WTC11 (cell line): ENCODE measurements at regions of chr14 and their contacts with region 1.

Region 1: DNA sequence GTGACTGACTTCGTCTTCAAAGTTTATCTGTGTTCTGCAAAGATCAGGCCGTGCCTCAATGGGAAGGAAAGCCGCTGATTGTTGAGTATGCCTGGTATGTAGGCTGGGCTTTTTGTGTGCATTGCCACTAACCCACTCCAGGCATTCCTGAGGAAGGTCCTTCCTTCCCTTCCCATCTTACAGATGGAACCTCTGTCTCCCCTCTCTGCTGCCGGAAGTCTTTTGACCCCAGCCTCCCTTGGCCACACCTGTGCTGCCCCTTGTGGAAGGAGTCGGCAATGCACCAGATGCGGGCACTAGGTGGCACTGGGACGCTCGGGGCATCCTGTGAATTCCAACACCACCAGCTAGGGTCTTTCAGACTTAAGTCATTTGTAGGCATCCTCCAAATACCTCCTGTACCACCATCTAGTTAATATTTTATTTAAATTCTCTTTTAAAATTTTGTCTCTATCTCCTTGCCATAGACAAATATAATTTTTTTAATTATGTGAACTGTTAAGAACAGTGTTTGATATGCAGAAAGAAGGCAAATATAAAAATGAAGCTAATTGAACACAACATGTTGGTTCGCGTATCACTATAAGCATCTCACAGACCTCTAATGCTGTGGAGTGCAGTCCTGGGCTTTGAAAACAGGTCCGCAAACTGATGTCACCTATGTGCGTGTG is 99.5 kb downstream of the RIN3 start:
- DNase-seq: peak; percentile 89
- ATAC-seq: peak; percentile 93
- H3K4me3 Mint-ChIP-seq: no peak overlapping the region
- H3K27ac Mint-ChIP-seq: no peak overlapping the region
- H3K4me1 Mint-ChIP-seq: peaks cover 13% of the 10 kb centered on the region
- H3K27me3 Mint-ChIP-seq: no peaks in the 10 kb centered on the region; the same call in 1 of the 2 replicates
- CTCF ChIP-seq: peak; percentile 89

Region 2: GRCh38 chr14:92551044-92551841 is 61.9 kb before region 1 on chr14:
- CTCF ChIA-PET with region 1: no interaction called
- POLR2A ChIA-PET with region 1: no interaction called
- DNase-seq: no peak
- ATAC-seq: no peak
- H3K4me3 Mint-ChIP-seq: no peak overlapping the region
- H3K27ac Mint-ChIP-seq: no peak overlapping the region
- H3K4me1 Mint-ChIP-seq: peaks cover 7% of the 10 kb centered on the region; the same call in 1 of the 2 replicates
- H3K27me3 Mint-ChIP-seq: no peaks in the 10 kb centered on the region
- CTCF ChIP-seq: no peak

Region 3: GRCh38 chr14:92589213-92589852 is 23.8 kb before region 1 on chr14:
- CTCF ChIA-PET with region 1: interaction called, 13 read pairs
- POLR2A ChIA-PET with region 1: no interaction called
- DNase-seq: no peak
- ATAC-seq: peak; percentile 47; the same call in 1 of the 2 replicates
- H3K4me3 Mint-ChIP-seq: no peak overlapping the region
- H3K27ac Mint-ChIP-seq: no peak overlapping the region
- H3K4me1 Mint-ChIP-seq: no peaks in the 10 kb centered on the region
- H3K27me3 Mint-ChIP-seq: peaks cover 2% of the 10 kb centered on the region; the same call in 1 of the 2 replicates
- CTCF ChIP-seq: no peak

Region 4: GRCh38 chr14:92596331-92596911 is 16.7 kb before region 1 on chr14:
- CTCF ChIA-PET with region 1: interaction called, 13 read pairs
- POLR2A ChIA-PET with region 1: no interaction called
- DNase-seq: no peak
- ATAC-seq: peak; percentile 84
- H3K4me3 Mint-ChIP-seq: no peak overlapping the region
- H3K27ac Mint-ChIP-seq: no peak overlapping the region
- H3K4me1 Mint-ChIP-seq: 0 out of 2 replicates have a peak, but pooled peaks cover 3% of the 10 kb centered on the region
- H3K27me3 Mint-ChIP-seq: peaks cover 2% of the 10 kb centered on the region; the same call in 1 of the 2 replicates
- CTCF ChIP-seq: no peak

Region 5: DNA sequence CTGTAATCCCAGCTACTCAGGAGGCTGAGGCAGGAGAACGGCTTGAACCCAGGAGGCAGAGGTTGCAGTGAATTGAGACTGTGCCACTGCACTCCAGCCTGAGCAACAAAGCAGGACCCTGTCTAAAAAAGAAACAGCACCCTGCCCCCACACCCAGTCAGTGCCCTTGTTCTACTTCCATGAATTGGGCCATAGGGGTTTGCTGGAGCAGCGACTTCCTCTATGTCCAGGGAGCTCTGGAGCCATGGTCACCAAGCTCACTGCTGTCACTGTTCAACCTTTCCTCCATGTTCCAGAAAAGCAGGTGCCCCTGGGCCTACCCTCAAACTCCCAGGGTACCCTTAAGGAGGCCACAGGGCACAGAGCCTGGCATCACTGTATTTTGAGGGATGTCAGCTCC is 17.2 kb after region 1 on chr14:
- CTCF ChIA-PET with region 1: interaction called, 16 read pairs
- POLR2A ChIA-PET with region 1: no interaction called
- DNase-seq: no peak
- ATAC-seq: no peak
- H3K4me3 Mint-ChIP-seq: no peak overlapping the region
- H3K27ac Mint-ChIP-seq: no peak overlapping the region
- H3K4me1 Mint-ChIP-seq: peaks cover 20% of the 10 kb centered on the region
- H3K27me3 Mint-ChIP-seq: no peaks in the 10 kb centered on the region; the same call in 1 of the 2 replicates
- CTCF ChIP-seq: no peak